Activated CD8-positive, alpha-beta T cell treated with anti-CD3 and anti-CD28 coated beads, Interleukin-2, amount 10 ng/mL, durations not matched to agents 7 days and 5 days (primary cell): ENCODE measurements at regions of chr2 and their contacts with region 1.

Region 1: GRCh38 chr2:38581193-38582147 is 21.3 kb downstream of the HNRNPLL start:
- DNase-seq: peak; percentile 59
- ATAC-seq: peak; percentile 89
- H3K4me3 Mint-ChIP-seq: no peak overlapping the region
- H3K27ac Mint-ChIP-seq: no peak overlapping the region
- H3K4me1 Mint-ChIP-seq: peaks cover 8% of the 10 kb centered on the region
- H3K27me3 Mint-ChIP-seq: no peaks in the 10 kb centered on the region

Region 2: DNA sequence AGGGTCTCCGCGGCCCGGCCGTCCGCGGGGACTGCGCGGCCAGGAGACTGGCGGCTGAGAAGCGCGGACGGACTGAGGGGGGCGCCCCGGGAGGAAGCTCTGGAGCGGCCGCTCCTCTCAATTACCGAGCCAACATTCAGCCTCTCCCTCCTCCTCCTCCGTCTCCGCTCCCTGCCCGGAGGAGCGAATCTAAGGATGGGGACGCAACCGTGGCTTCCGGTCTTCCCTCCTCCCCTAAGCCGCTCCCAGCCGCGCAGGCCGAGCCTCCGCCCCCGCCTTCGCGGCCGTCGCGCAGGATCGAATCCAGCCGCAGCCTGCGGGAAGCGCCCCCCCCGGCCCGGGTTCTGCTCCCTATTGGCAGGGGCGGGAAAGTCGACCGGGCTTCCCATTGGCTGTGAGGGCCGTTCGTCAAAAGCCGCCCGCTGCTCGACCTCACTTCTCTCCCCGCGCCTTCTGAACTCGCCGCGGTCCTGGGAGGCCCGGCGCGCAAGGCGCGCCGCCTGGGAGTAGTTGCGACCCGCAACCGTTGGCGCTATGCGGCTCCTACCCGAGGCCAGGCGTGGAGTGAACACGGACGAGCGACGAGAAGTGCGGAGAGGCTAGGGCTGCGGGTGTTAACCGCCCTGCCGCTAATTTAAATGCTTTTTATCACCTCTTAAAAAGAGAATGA is 21.4 kb after region 1 on chr2 and contains the start of gene HNRNPLL:
- CTCF ChIA-PET with region 1: interaction called, 181 read pairs
- POLR2A ChIA-PET with region 1: no interaction called
- DNase-seq: peak; percentile 97
- ATAC-seq: peak; percentile 89
- H3K4me3 Mint-ChIP-seq: peak within 1 kb of the TSS; percentile 89
- H3K27ac Mint-ChIP-seq: peak within 1 kb of the TSS; percentile 90
- H3K4me1 Mint-ChIP-seq: peaks cover 50% of the 10 kb centered on the region
- H3K27me3 Mint-ChIP-seq: no peaks in the 10 kb centered on the region
- total RNA-seq, gene HNRNPLL: 46.5 to 46.6 TPM

Region 3: DNA sequence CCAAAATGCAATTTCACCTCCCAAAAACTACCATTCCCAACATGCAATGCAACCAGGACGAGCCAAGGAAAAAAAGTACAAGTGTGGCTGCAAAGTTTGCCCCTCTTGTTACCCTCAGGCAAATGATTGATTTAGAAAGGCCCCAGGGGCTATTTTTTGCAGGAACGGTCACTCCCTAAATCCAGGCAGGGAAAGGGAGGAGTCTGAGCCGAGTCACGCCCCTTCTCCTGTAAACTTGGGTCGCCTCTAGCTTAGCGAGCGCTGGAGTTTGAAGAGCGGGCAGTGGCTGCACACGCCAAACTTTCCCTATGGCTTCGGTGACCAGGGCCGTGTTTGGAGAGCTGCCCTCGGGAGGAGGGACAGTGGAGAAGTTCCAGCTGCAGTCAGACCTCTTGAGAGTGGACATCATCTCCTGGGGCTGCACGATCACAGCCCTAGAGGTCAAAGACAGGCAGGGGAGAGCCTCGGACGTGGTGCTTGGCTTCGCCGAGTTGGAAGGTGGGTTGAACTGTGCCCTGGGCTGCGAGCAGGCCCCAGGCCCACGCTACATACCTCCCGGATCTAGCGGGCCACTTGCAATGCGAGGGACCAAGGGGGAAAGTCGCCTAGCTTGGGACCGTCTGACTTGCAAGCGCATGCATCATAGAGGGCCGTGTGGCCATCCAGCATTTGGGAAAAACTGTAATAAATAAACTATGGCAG is 84.5 kb after region 1 on chr2 and contains the start of gene GALM:
- CTCF ChIA-PET with region 1: interaction called, 35 read pairs
- POLR2A ChIA-PET with region 1: interaction called, 7 read pairs
- DNase-seq: peak; percentile 73
- ATAC-seq: peak; percentile 45
- H3K4me3 Mint-ChIP-seq: peak within 1 kb of the TSS; percentile 82
- H3K27ac Mint-ChIP-seq: peak within 1 kb of the TSS; percentile 89
- H3K4me1 Mint-ChIP-seq: peaks cover 63% of the 10 kb centered on the region
- H3K27me3 Mint-ChIP-seq: no peaks in the 10 kb centered on the region
- total RNA-seq, gene GALM: 27.6 TPM

Region 4: GRCh38 chr2:38700113-38700785 is 118.8 kb after region 1 on chr2:
- CTCF ChIA-PET with region 1: interaction called, 11 read pairs
- POLR2A ChIA-PET with region 1: no interaction called
- DNase-seq: no peak
- ATAC-seq: peak; percentile 71
- H3K4me3 Mint-ChIP-seq: peak overlapping the region; percentile 44
- H3K27ac Mint-ChIP-seq: peak overlapping the region; percentile 76
- H3K4me1 Mint-ChIP-seq: peaks cover 33% of the 10 kb centered on the region
- H3K27me3 Mint-ChIP-seq: no peaks in the 10 kb centered on the region

Region 5: GRCh38 chr2:38734299-38735058 is 153.0 kb after region 1 on chr2:
- CTCF ChIA-PET with region 1: interaction called, 160 read pairs
- POLR2A ChIA-PET with region 1: interaction called, 5 read pairs
- DNase-seq: no peak
- ATAC-seq: no peak
- H3K4me3 Mint-ChIP-seq: no peak overlapping the region
- H3K27ac Mint-ChIP-seq: no peak overlapping the region
- H3K4me1 Mint-ChIP-seq: peaks cover 3% of the 10 kb centered on the region
- H3K27me3 Mint-ChIP-seq: no peaks in the 10 kb centered on the region

Region 6: GRCh38 chr2:39755466-39755865 is 1174.0 kb after region 1 on chr2:
- CTCF ChIA-PET with region 1: no interaction called
- POLR2A ChIA-PET with region 1: no interaction called
- DNase-seq: no peak
- ATAC-seq: no peak
- H3K4me3 Mint-ChIP-seq: no peak overlapping the region
- H3K27ac Mint-ChIP-seq: no peak overlapping the region
- H3K4me1 Mint-ChIP-seq: no peaks in the 10 kb centered on the region
- H3K27me3 Mint-ChIP-seq: no peaks in the 10 kb centered on the region